PC-3 (cell line): ENCODE measurements at regions of chr4 and their contacts with region 1.

Region 1: DNA sequence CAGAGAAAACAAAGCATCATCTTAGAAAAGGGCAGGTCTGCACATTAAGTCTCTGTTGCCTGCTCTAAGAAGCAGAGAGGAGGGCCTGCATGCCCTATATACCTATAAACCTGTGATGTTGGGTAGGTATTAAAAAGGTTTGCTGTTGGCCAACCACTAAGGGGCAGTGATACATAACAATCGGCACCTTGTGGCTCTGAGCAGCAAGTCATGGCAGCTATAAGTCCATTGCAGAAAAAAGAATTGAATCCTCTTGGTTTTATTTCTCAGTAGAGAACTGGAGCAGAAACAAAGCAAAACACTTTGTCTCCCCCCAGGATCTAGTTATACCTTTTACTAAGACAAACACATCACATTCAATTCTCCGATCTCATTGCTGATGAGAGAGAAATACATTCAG is 1364.4 kb downstream of the STIM2 start:
- DNase-seq: peak; percentile 62
- ATAC-seq: peak; percentile 81
- H3K4me3 ChIP-seq: no peak overlapping the region
- H3K27ac ChIP-seq: no peak overlapping the region
- H3K4me1 ChIP-seq: peaks cover 26% of the 10 kb centered on the region
- H3K27me3 ChIP-seq: no peaks in the 10 kb centered on the region
- CTCF ChIP-seq: peak; percentile 68

Region 2: GRCh38 chr4:27684610-27685011 is 540.4 kb before region 1 on chr4:
- CTCF ChIA-PET with region 1: interaction called, 8 read pairs
- POLR2A ChIA-PET with region 1: no interaction called
- intact Hi-C with region 1: loop called (anchors 10 kb)
- DNase-seq: peak; percentile 71
- ATAC-seq: peak; percentile 92
- H3K4me3 ChIP-seq: no peak overlapping the region
- H3K27ac ChIP-seq: no peak overlapping the region
- H3K4me1 ChIP-seq: no peaks in the 10 kb centered on the region
- H3K27me3 ChIP-seq: no peaks in the 10 kb centered on the region
- CTCF ChIP-seq: peak; percentile 78

Region 3: GRCh38 chr4:28350485-28350884 is 125.4 kb after region 1 on chr4:
- CTCF ChIA-PET with region 1: no interaction called
- POLR2A ChIA-PET with region 1: no interaction called
- intact Hi-C with region 1: loop called (anchors 5 kb)
- DNase-seq: peak; percentile 43
- ATAC-seq: peak; percentile 73
- H3K4me3 ChIP-seq: no peak overlapping the region
- H3K27ac ChIP-seq: no peak overlapping the region
- H3K4me1 ChIP-seq: no peaks in the 10 kb centered on the region
- H3K27me3 ChIP-seq: no peaks in the 10 kb centered on the region
- CTCF ChIP-seq: no peak

Region 4: DNA sequence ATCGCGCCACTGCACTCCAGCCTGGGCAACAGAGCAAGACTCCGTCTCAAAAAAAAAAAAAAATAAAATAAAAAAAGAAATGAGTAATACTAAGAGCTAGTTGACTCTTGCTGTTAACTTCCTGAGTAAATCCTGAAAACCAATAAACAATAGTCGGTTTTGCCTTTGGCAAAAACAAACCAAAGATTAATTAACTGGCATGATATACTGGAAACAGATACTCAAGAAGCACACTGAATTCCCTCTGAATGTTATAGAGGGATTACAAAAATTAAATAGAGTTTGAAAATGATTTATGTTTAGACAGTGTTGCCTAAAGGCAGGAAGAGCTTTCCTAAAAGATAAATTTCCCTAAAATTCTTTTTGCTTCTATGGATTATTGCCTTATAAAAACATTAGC is 337.9 kb after region 1 on chr4:
- CTCF ChIA-PET with region 1: no interaction called
- POLR2A ChIA-PET with region 1: no interaction called
- intact Hi-C with region 1: loop called (anchors 5 kb)
- DNase-seq: peak; percentile 62
- ATAC-seq: peak; percentile 61
- H3K4me3 ChIP-seq: no peak overlapping the region
- H3K27ac ChIP-seq: no peak overlapping the region
- H3K4me1 ChIP-seq: peaks cover 6% of the 10 kb centered on the region
- H3K27me3 ChIP-seq: no peaks in the 10 kb centered on the region
- CTCF ChIP-seq: no peak

Region 5: DNA sequence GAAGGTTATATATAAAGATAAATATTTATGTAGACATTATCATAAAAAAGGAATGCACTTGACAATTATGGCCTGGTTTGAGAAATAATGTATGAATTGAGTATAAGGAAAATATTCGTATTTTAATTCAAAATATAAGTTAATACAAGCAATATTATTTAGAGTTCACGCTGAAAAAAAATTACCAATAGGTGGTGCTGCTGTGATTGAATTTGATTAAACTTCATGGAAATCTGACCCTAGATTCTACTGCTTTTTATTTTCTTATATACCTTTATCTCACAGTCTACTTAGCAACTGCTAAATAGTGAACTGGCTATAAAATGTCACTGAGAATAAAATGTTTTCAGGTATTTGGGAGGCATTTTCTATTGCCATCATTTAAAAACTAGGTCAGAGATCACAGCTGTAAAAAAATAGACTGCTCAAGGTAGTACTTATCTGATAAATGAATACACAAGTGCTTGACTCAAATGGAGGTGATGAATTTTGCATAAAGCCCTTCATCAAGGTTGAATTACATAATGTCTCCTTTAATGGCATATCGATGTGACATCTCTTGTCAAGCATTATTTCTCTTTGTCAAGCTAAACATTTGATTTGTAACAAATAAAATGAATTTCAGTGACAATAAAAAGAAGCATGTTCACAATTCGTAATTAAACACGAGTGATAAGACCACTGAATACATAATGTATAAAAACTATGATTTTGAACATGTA is 856.3 kb after region 1 on chr4:
- CTCF ChIA-PET with region 1: no interaction called
- POLR2A ChIA-PET with region 1: no interaction called
- intact Hi-C with region 1: loop called (anchors 5 kb)
- DNase-seq: peak; percentile 54
- ATAC-seq: peak; percentile 33
- H3K4me3 ChIP-seq: no peak overlapping the region
- H3K27ac ChIP-seq: no peak overlapping the region
- H3K4me1 ChIP-seq: peaks cover 13% of the 10 kb centered on the region
- H3K27me3 ChIP-seq: no peaks in the 10 kb centered on the region
- CTCF ChIP-seq: peak; percentile 59